Upper lobe of right lung (tissue), 1 donor: ENCODE measurements at regions of chr19 and their contacts with region 1.

Region 1: DNA sequence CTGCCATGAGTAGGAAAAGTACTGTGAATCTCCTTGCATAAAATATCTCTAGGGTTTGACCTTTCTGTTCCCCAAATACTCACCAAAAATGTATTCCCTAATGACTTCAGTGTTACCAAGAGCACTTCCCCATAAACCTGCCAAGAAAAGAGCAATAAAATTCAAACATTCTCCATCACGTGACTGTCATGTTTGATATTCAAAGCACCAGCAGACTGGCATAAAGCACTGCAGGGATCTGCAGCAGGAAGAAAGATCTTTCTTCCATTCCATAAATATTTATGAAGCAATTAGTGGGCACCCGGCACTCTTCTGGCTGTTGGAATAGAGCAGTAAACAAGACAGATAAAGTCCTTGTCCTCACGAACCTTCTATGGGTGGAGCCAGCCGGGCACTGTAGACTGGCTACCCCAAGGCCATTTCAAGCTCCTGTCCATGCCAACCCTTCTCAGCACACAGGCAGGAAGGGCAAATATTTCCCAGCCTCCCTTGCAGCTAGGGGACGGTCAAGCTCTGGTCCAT is 20.3 kb downstream of the PLA2G4C start:
- DNase-seq: no peak
- ATAC-seq: no peak
- H3K4me3 ChIP-seq: no peak overlapping the region
- H3K27ac ChIP-seq: no peak overlapping the region
- H3K4me1 ChIP-seq: no peaks in the 10 kb centered on the region
- H3K27me3 ChIP-seq: no peaks in the 10 kb centered on the region
- CTCF ChIP-seq: no peak

Region 2: GRCh38 chr19:48010932-48011764 is 79.2 kb before region 1 on chr19:
- intact Hi-C with region 1: no loop called
- DNase-seq: no peak
- ATAC-seq: no peak
- H3K4me3 ChIP-seq: no peak overlapping the region
- H3K27ac ChIP-seq: no peak overlapping the region
- H3K4me1 ChIP-seq: no peaks in the 10 kb centered on the region
- H3K27me3 ChIP-seq: peaks cover 8% of the 10 kb centered on the region
- CTCF ChIP-seq: no peak

Region 3: DNA sequence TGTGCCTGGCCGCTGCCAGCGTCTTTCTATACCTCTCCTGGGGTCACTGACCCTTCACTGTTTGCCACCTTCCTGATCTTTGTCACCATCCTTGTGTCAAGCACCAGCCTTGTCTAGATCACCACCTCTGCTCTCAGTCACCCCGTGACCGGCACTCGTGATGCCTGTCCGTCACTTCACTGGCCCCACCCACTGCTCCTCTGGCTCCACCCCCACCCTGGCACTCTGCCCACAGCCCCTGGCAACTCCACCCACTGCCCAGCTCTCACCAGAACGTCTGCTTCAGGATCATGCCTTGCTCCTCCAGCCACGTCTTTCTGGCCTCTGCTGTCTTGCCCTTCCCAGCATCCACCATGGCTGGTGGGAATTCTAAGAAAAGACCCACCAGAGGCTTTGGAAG is 45.1 kb after region 1 on chr19:
- intact Hi-C with region 1: no loop called
- DNase-seq: no peak
- ATAC-seq: no peak
- H3K4me3 ChIP-seq: no peak overlapping the region
- H3K27ac ChIP-seq: no peak overlapping the region
- H3K4me1 ChIP-seq: no peaks in the 10 kb centered on the region
- H3K27me3 ChIP-seq: no peaks in the 10 kb centered on the region
- CTCF ChIP-seq: no peak

Region 4: DNA sequence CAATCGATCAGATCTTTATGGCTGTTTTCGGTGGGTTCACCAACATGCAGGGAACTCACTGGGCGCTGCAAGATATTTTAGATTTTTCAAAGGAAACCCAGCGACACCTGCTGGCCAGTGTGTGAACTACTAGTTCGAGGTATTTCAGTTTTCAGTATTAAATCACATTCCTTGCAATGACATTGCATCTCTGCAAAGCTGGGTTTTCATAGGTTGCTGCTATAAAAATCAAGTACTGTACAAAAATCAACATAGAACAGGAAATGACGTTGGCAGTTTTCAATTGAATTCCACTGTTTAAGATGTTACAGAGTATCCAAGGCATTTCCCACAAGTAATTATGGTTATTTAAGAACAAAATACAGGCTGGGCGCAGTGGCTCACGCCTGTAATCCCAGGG is 62.2 kb after region 1 on chr19:
- intact Hi-C with region 1: loop called (anchors 10 kb)
- DNase-seq: no peak
- ATAC-seq: peak; percentile 72
- H3K4me3 ChIP-seq: no peak overlapping the region
- H3K27ac ChIP-seq: no peak overlapping the region
- H3K4me1 ChIP-seq: no peaks in the 10 kb centered on the region
- H3K27me3 ChIP-seq: no peaks in the 10 kb centered on the region
- CTCF ChIP-seq: peak; percentile 85

Region 5: GRCh38 chr19:48221628-48222027 is 131.3 kb after region 1 on chr19:
- intact Hi-C with region 1: no loop called
- DNase-seq: no peak
- ATAC-seq: no peak
- H3K4me3 ChIP-seq: no peak overlapping the region
- H3K27ac ChIP-seq: no peak overlapping the region
- H3K4me1 ChIP-seq: no peaks in the 10 kb centered on the region
- H3K27me3 ChIP-seq: no peaks in the 10 kb centered on the region
- CTCF ChIP-seq: no peak